ENCODE measurements at regions of chr12 and their contacts with region 1.

Region 1: DNA sequence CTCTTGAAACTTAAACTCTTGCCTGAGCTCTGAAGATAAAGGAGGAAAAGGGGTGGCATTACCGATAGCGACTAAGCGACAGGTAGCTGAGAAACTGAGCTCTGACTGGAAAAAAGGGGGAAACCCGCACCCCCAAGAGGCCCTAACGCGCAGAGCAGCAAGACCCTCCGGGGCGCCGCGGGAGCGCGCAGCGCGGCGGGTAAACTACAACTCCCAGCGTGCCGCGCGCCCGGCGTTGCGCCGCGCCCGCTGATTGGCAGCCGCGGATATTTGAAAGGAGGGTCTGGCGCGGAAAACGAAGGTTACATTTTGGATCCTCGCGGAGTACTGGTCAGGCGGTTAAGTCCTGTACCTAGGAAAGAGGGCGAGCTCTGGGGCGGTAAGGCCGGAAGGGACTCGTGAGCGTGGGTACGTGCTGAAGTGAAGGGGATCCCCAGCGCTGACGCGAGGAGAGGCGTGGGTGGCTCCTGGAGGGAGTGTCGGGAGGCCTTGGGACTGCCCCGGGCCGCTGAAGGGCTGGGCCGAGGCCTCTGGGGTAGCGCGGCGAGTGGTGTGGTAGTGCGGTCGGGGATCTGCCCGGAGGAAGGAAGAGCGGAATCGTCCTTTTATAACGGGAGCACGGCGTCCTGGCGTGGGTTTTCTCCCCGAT is at the start of gene ESPL1:
- DNase-seq: peak; percentile 93
- H3K4me3 Mint-ChIP-seq: peak within 1 kb of the TSS; percentile 97
- H3K27ac Mint-ChIP-seq: peak within 1 kb of the TSS; percentile 95
- H3K4me1 Mint-ChIP-seq: peaks cover 36% of the 10 kb centered on the region
- H3K27me3 Mint-ChIP-seq: no peaks in the 10 kb centered on the region
- total RNA-seq, gene ESPL1: 70.0 to 77.2 TPM

Region 2: DNA sequence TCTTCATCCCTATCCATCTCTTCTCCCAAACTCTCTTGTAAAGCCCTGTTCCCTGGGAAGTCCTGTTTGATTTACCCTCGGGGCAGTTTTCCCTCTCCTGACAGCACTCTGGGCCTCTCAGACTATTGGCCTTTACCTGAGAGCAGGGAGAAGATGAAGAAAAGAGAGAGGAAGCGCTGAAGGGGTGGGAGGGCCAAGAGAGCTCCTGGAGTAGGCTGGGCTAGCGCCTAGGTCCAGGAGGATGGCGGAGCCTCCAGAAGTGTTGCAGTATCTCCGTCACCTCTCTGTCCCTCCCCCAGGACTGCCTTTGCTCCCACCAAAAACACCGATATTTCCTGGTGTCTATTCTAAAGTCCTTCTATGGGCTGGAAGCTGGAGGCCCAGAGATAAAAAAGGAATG is 176.4 kb before region 1 on chr12:
- CTCF ChIA-PET with region 1: no interaction called
- POLR2A ChIA-PET with region 1: no interaction called
- intact Hi-C with region 1: no loop called
- DNase-seq: no peak
- H3K4me3 Mint-ChIP-seq: no peak overlapping the region
- H3K27ac Mint-ChIP-seq: no peak overlapping the region
- H3K4me1 Mint-ChIP-seq: no peaks in the 10 kb centered on the region
- H3K27me3 Mint-ChIP-seq: peaks cover 7% of the 10 kb centered on the region

Region 3: DNA sequence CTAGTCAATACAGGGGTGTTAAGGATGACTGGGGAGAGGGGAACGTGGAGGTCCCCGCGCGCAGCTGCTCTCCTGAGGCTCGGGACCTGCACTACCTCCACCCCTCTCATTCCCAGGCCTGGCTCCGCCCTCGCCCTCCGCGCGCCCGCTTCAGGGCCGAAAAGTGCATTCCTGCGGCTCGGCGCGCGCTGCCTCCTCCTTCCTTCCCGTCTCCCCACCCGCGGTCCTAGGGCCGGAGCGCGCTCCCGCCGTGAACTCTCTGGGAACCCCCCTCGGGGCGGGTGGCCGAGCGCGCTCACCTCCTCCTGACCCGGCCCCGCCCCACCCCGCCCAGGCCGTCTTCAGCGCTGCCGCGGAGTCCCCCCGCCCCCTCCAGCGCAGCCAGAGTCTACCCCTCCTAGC is 47.3 kb before region 1 on chr12:
- CTCF ChIA-PET with region 1: interaction called, 109 read pairs
- POLR2A ChIA-PET with region 1: interaction called, 24 read pairs
- intact Hi-C with region 1: loop called (anchors 1 kb)
- DNase-seq: peak; percentile 92
- H3K4me3 Mint-ChIP-seq: peak overlapping the region; percentile 80
- H3K27ac Mint-ChIP-seq: peak overlapping the region; percentile 93
- H3K4me1 Mint-ChIP-seq: peaks cover 74% of the 10 kb centered on the region
- H3K27me3 Mint-ChIP-seq: no peaks in the 10 kb centered on the region

Region 4: DNA sequence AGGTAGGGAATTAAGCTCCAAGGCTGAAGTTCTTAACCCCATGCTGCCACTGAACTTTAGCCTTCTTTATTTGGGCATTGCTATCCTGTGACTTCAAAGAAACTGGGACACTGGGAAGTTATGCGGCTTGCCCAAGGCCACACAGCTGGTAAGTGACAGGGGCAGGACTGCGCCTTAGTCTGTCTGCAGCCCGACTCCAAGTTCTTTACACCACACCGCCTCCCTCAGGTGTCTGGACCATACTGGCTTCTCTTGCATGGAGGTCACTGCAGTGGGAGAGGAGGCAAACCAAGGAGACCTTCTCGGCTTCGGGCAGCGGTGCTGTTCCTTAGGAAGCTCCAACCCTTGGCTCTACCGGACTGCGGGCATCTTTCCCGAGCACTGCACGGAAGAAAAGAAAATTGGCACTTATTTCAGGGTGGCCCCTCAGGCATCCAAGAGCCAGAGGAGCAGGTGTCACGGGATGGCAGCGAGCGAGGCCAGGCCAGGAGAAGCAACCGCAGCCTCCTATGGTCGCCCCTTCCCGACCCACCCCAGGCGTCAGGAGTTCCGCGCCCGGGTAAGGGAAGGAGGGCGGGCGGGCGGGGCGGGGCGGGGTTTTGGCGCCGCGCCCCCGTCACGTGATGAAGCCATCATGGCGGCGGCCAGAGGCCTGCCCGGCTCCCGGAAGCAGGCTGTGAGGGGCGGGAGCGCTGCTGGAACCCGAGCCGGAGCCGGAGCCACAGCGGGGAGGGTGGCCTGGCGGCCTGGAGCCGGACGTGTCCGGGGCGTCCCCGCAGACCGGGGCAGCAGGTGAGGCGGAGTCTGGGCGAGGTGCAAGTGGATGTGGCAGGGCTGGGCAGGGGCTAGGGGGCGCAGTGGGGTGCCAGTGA is 16.4 kb before region 1 on chr12:
- CTCF ChIA-PET with region 1: interaction called, 22 read pairs
- POLR2A ChIA-PET with region 1: interaction called, 4 read pairs
- intact Hi-C with region 1: loop called (anchors 1 kb)
- DNase-seq: peak; percentile 79
- H3K4me3 Mint-ChIP-seq: peak overlapping the region; percentile 97
- H3K27ac Mint-ChIP-seq: peak overlapping the region; percentile 89
- H3K4me1 Mint-ChIP-seq: peaks cover 40% of the 10 kb centered on the region
- H3K27me3 Mint-ChIP-seq: no peaks in the 10 kb centered on the region

Region 5: DNA sequence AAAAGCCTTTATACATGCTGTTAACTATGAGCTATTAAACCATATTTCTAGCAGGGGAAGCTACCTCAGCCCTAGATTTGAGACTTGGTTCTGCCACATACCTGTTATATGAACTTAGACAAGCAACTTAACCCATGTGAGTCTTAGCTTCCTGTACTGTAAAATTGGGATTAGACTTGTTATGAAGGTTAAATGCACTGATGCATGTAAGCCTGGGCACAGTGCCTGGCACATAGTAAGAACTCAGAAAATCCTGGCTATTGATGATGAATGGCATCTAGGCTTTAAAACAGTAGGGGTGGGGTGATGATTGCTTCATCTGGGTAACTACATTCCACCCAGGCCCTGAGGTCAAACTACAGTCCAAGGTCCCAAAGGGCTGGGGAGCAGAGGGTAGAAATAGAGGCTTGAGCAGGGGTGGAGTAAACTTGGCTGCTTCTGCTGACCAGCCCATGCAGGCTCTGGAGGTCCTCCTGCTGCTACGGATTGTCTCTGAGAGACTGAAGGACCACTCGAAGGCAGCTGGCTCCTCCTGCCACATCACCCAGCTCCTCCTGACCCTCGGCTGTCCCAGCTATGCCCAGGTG is 11.3 kb after region 1 on chr12:
- CTCF ChIA-PET with region 1: no interaction called
- POLR2A ChIA-PET with region 1: interaction called, 17 read pairs
- intact Hi-C with region 1: no loop called
- DNase-seq: no peak
- H3K4me3 Mint-ChIP-seq: no peak overlapping the region
- H3K27ac Mint-ChIP-seq: no peak overlapping the region
- H3K4me1 Mint-ChIP-seq: no peaks in the 10 kb centered on the region
- H3K27me3 Mint-ChIP-seq: no peaks in the 10 kb centered on the region

Region 6: GRCh38 chr12:53287741-53288216 is 19.7 kb after region 1 on chr12:
- CTCF ChIA-PET with region 1: interaction called, 29 read pairs
- POLR2A ChIA-PET with region 1: interaction called, 7 read pairs
- intact Hi-C with region 1: no loop called
- DNase-seq: peak; percentile 76
- H3K4me3 Mint-ChIP-seq: no peak overlapping the region
- H3K27ac Mint-ChIP-seq: peak overlapping the region; percentile 68
- H3K4me1 Mint-ChIP-seq: peaks cover 19% of the 10 kb centered on the region
- H3K27me3 Mint-ChIP-seq: no peaks in the 10 kb centered on the region

Region 7: GRCh38 chr12:53295070-53295890 is 27.2 kb after region 1 on chr12 and contains the start of gene PFDN5:
- CTCF ChIA-PET with region 1: interaction called, 29 read pairs
- POLR2A ChIA-PET with region 1: interaction called, 12 read pairs
- intact Hi-C with region 1: loop called (anchors 1 kb)
- DNase-seq: peak; percentile 92
- H3K4me3 Mint-ChIP-seq: peak within 1 kb of the TSS; percentile 99
- H3K27ac Mint-ChIP-seq: peak within 1 kb of the TSS; percentile 94
- H3K4me1 Mint-ChIP-seq: peaks cover 53% of the 10 kb centered on the region
- H3K27me3 Mint-ChIP-seq: no peaks in the 10 kb centered on the region
- total RNA-seq, gene PFDN5: 354 to 359 TPM

Region 8: GRCh38 chr12:53344824-53345485 is 76.8 kb after region 1 on chr12:
- CTCF ChIA-PET with region 1: interaction called, 12 read pairs
- POLR2A ChIA-PET with region 1: no interaction called
- intact Hi-C with region 1: no loop called
- DNase-seq: peak; percentile 86
- H3K4me3 Mint-ChIP-seq: peak overlapping the region; percentile 92
- H3K27ac Mint-ChIP-seq: peak overlapping the region; percentile 56
- H3K4me1 Mint-ChIP-seq: peaks cover 14% of the 10 kb centered on the region
- H3K27me3 Mint-ChIP-seq: no peaks in the 10 kb centered on the region

Measured in activated CD4-positive, alpha-beta memory T cell treated with anti-CD3 and anti-CD28 coated beads for 36 hours (primary cell).